ENCODE measurements at regions of chr22 and their contacts with region 1.

Region 1: DNA sequence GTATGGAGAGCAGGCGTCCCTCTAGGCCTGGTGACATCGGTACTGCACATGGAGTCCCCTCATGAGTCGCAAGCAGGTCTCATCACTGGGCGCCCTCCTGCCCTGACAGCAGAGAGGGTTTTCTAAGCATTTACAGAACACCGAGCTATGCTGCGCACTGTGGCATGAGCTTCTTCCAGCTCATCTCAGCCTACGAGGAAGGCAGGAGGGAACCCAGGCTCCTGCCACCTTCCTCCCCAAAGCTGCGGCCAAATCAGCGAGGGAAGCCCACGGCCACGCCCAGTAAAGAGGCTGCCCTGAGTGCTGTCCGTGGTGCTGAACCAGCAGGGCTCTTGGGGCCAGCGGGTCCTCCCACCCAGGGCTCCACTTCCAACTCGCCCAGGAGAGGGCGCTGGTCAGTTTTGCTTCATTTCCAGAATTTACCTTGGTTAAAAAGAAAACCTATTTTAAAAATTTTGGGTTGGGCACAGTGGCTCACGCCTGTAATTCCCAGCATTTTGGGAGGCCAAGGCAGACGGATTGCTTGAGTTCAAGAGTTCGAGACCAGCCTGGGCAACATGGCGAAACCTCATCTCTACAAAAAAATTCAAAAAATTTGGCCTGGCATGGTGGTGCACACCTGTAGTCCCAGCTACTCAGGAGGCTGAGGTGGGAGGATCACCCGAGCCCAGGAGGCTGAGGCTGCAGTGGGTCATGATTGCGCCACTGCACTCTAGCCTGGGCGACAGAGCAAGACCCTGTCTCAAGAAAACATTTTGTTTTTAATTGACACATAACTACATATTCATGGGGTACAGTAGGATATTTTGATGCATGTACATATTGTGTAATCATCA is 34.2 kb downstream of the PHF21B start:
- DNase-seq: peak; percentile 87
- ATAC-seq: peak; percentile 87

Region 2: GRCh38 chr22:45612451-45612901 is 636.8 kb after region 1 on chr22:
- intact Hi-C with region 1: loop called (anchors 10 kb)
- DNase-seq: peak; percentile 78
- ATAC-seq: peak; percentile 93

Region 3: DNA sequence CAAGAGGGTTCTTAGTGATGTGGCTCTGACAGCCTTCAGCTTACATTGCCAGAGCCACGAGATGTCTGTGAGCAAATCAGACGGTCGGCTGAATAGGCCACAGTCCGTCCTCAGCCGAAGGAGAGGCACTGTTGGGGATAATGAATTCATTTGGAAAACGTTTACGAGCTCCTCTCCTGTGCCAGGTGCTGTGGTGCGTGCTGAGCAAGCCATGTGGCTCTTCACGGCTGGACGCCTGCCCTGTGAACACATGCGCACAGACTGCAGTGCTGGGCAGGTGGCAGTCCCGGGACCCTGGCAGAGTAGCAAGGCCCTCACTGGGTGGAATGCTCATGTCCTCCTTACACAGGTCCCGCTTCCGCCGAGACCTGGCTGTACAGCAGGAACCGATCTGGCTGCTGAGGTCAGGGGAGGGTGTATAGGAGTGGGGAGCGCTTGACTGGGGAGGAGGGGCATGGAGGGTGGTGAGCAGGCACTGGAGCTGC is 1793.6 kb after region 1 on chr22:
- intact Hi-C with region 1: no loop called
- DNase-seq: no peak
- ATAC-seq: no peak

Measured in sciatic nerve (tissue), 2 donors.